Activated CD4-positive, alpha-beta memory T cell treated with anti-CD3 and anti-CD28 coated beads for 36 hours (primary cell): ENCODE measurements at regions of chr22 and their contacts with region 1.

Region 1: GRCh38 chr22:37608477-37609239 is at the start of gene GGA1:
- DNase-seq: peak; percentile 97
- H3K4me3 Mint-ChIP-seq: peak within 1 kb of the TSS; percentile 87
- H3K27ac Mint-ChIP-seq: peak within 1 kb of the TSS; percentile 99
- H3K4me1 Mint-ChIP-seq: peaks cover 54% of the 10 kb centered on the region
- H3K27me3 Mint-ChIP-seq: no peaks in the 10 kb centered on the region
- total RNA-seq, gene GGA1: 59.0 to 61.1 TPM

Region 2: GRCh38 chr22:37479196-37479595 is 129.5 kb before region 1 on chr22:
- CTCF ChIA-PET with region 1: no interaction called
- POLR2A ChIA-PET with region 1: no interaction called
- intact Hi-C with region 1: no loop called
- DNase-seq: no peak
- H3K4me3 Mint-ChIP-seq: no peak overlapping the region
- H3K27ac Mint-ChIP-seq: no peak overlapping the region
- H3K4me1 Mint-ChIP-seq: peaks cover 29% of the 10 kb centered on the region
- H3K27me3 Mint-ChIP-seq: no peaks in the 10 kb centered on the region

Region 3: DNA sequence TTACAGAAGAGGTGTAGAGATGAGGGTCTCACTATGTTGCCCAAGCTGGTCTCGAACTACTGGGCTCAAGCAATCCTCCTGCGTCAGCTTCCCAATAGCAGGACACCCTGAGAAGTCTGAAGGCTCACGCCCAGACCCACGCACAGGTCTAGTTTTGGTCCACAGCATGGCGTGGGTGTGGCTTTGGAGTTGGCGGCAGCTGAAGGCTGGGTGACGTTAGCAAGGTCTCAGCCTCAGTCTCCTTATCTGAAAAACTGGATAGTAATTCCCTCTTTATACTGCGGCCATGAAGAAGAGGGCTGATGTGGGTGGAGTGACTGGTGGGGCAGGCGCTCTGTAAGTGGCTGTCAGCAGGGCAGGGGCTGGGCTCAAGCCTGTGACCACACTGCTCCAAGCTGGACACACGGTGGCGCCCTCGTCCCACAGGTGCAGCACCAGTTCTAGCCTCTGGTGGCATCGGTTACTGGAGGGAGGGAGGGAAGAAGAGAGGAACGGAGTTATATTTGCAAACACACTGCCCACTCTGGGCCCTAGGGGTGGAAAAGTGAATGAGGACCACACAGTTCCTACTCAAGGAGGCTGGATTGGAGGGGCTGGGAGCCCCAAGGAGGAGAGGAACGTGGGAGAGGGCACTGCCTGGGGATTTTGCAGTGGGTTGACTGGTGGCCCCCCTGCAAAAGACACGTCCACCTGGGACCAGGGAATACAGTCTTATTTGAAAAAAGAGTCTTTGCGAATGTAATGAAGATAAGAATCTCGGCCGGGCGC is 69.9 kb before region 1 on chr22:
- CTCF ChIA-PET with region 1: interaction called, 26 read pairs
- POLR2A ChIA-PET with region 1: no interaction called
- intact Hi-C with region 1: loop called (anchors 1 kb)
- DNase-seq: peak; percentile 96
- H3K4me3 Mint-ChIP-seq: peak overlapping the region; percentile 34
- H3K27ac Mint-ChIP-seq: peak overlapping the region; percentile 57
- H3K4me1 Mint-ChIP-seq: peaks cover 42% of the 10 kb centered on the region
- H3K27me3 Mint-ChIP-seq: peaks cover 22% of the 10 kb centered on the region

Region 4: GRCh38 chr22:37566903-37567820 is 41.5 kb before region 1 on chr22:
- CTCF ChIA-PET with region 1: interaction called, 13 read pairs
- POLR2A ChIA-PET with region 1: interaction called, 3 read pairs
- intact Hi-C with region 1: no loop called
- DNase-seq: peak; percentile 96
- H3K4me3 Mint-ChIP-seq: peak overlapping the region; percentile 35
- H3K27ac Mint-ChIP-seq: peak overlapping the region; percentile 81
- H3K4me1 Mint-ChIP-seq: peaks cover 27% of the 10 kb centered on the region
- H3K27me3 Mint-ChIP-seq: peaks cover 24% of the 10 kb centered on the region

Region 5: DNA sequence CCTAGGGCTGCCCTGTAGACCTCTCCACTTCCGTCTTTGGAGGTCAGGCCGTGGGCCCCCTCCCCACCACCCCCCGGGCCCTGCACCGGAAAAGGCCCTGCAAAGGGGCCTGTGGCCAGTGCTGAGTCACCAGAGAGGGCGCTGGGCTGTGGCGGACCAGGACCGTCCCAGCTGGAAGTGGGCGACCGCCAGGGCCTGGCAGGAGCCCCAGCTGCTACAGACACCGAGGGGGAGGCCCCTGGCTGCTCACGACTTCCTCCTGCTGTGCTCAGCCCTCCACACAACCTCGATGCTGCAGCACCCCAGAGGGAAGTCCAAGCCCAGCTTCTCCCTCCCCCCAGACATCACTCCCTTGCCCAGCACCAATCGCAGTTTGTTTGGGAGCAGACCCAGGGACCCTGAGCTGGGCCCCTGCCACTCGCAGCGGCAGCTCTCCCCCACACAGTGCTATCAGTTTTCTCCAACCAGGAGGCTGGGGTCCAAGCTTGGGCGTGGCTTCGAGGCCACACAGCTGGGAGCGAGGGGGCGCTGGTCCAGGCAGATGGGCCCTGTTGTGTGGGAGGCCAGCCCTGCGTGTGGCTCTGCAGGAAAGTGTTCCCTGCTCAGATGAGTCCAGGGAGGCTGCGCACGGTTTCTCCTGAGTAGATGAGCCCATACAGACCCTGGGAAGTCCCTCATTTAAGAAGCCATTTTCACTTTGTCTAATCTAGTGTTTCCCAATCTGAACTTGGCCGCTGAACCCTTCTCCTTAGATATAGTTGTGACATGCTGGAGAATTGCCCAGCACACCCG is 25.2 kb after region 1 on chr22:
- CTCF ChIA-PET with region 1: interaction called, 18 read pairs
- POLR2A ChIA-PET with region 1: interaction called, 27 read pairs
- intact Hi-C with region 1: loop called (anchors 1 kb)
- DNase-seq: peak; percentile 85
- H3K4me3 Mint-ChIP-seq: peak overlapping the region; percentile 66
- H3K27ac Mint-ChIP-seq: peak overlapping the region; percentile 95
- H3K4me1 Mint-ChIP-seq: peaks cover 65% of the 10 kb centered on the region
- H3K27me3 Mint-ChIP-seq: no peaks in the 10 kb centered on the region

Region 6: GRCh38 chr22:37676736-37677492 is 68.3 kb after region 1 on chr22:
- CTCF ChIA-PET with region 1: interaction called, 50 read pairs
- POLR2A ChIA-PET with region 1: interaction called, 15 read pairs
- intact Hi-C with region 1: loop called (anchors 1 kb)
- DNase-seq: peak; percentile 97
- H3K4me3 Mint-ChIP-seq: peak overlapping the region; percentile 87
- H3K27ac Mint-ChIP-seq: peak overlapping the region; percentile 93
- H3K4me1 Mint-ChIP-seq: peaks cover 52% of the 10 kb centered on the region
- H3K27me3 Mint-ChIP-seq: no peaks in the 10 kb centered on the region

Region 7: GRCh38 chr22:37696657-37697537 is 88.2 kb after region 1 on chr22 and contains the start of gene TRIOBP:
- CTCF ChIA-PET with region 1: no interaction called
- POLR2A ChIA-PET with region 1: no interaction called
- intact Hi-C with region 1: no loop called
- DNase-seq: peak; percentile 92
- H3K4me3 Mint-ChIP-seq: peak within 1 kb of the TSS; percentile 50
- H3K27ac Mint-ChIP-seq: no peak within 1 kb of the TSS
- H3K4me1 Mint-ChIP-seq: peaks cover 9% of the 10 kb centered on the region
- H3K27me3 Mint-ChIP-seq: no peaks in the 10 kb centered on the region
- total RNA-seq, gene TRIOBP: 25.0 to 26.8 TPM

Region 8: GRCh38 chr22:37807410-37808293 is 199.0 kb after region 1 on chr22 and contains the start of gene GCAT:
- CTCF ChIA-PET with region 1: no interaction called
- POLR2A ChIA-PET with region 1: no interaction called
- intact Hi-C with region 1: loop called (anchors 5 kb)
- DNase-seq: peak; percentile 96
- H3K4me3 Mint-ChIP-seq: peak within 1 kb of the TSS; percentile 77
- H3K27ac Mint-ChIP-seq: no peak within 1 kb of the TSS
- H3K4me1 Mint-ChIP-seq: peaks cover 33% of the 10 kb centered on the region
- H3K27me3 Mint-ChIP-seq: peaks cover 46% of the 10 kb centered on the region
- total RNA-seq, gene GCAT: 21.8 TPM